CD4-positive, alpha-beta memory T cell (primary cell): ENCODE measurements at regions of chrX and their contacts with region 1.

Region 1: GRCh38 chrX:44872817-44873414 is at the start of gene KDM6A:
- DNase-seq: peak; percentile 97 to 99 (median 99)
- H3K4me3 ChIP-seq: peak within 1 kb of the TSS; percentile 62 to 73
- H3K4me3 Mint-ChIP-seq: peak within 1 kb of the TSS; percentile 93 to 100 (median 99)
- H3K27ac ChIP-seq: peak within 1 kb of the TSS; percentile 85
- H3K27ac Mint-ChIP-seq: peak within 1 kb of the TSS; percentile 97 to 100 (median 99)
- H3K4me1 ChIP-seq: peaks cover 30% of the 10 kb centered on the region
- H3K4me1 Mint-ChIP-seq: peaks cover 9 to 38% (median 28%) of the 10 kb centered on the region in 4 donors
- H3K27me3 ChIP-seq: no peaks in the 10 kb centered on the region
- H3K27me3 Mint-ChIP-seq: no peaks in the 10 kb centered on the region
- total RNA-seq, gene KDM6A: 44.9 to 51.2 TPM

Region 2: GRCh38 chrX:44542567-44543325 is 330.2 kb before region 1 on chrX and contains the start of gene FUNDC1:
- CTCF ChIA-PET with region 1: no interaction called
- POLR2A ChIA-PET with region 1: interaction called, 4 read pairs
- intact Hi-C with region 1: loop called (anchors 5 kb)
- DNase-seq: peak; percentile 90 to 92 (median 91)
- H3K4me3 ChIP-seq: peak within 1 kb of the TSS; percentile 52 to 66
- H3K4me3 Mint-ChIP-seq: peak within 1 kb of the TSS; percentile 90 to 96 (median 96)
- H3K27ac ChIP-seq: peak within 1 kb of the TSS; percentile 73
- H3K27ac Mint-ChIP-seq: peak within 1 kb of the TSS; percentile 82 to 97 (median 96)
- H3K4me1 ChIP-seq: peaks cover 26% of the 10 kb centered on the region
- H3K4me1 Mint-ChIP-seq: peaks cover 11 to 38% (median 33%) of the 10 kb centered on the region in 4 donors
- H3K27me3 ChIP-seq: no peaks in the 10 kb centered on the region
- H3K27me3 Mint-ChIP-seq: no peaks in the 10 kb centered on the region
- total RNA-seq, gene FUNDC1: 7.4 to 8.7 TPM

Region 3: DNA sequence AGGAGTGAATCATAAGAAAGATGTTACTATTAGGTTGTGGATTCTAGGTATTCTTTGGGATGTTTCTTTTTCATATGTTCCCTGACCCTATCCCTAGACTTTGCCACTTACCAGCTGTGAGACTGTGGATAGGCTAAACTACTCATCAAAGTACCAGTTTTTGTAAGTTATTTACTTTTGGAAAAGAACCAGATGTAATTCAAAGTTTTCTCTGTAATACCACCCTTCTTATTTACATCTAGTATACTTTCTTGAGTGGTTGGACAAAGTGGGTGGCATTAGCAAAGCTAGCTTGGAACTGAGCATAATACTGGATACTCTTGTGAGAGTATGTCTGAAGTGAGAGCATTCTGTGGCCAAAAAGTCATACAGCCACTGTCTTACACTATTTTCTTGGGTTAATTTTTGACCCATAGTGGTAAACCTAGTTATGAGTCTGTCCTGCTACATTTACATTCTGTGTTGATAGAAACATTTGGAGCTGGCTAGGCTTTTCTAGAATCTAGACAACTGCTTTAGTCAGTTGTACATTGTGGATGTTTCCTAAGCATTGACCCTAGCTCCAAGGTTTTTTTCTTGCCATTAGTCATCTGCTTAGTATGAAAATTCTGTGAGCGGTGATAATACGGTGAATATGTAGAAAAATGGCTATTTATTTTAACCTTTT is 41.7 kb after region 1 on chrX:
- CTCF ChIA-PET with region 1: no interaction called
- POLR2A ChIA-PET with region 1: no interaction called
- intact Hi-C with region 1: no loop called
- DNase-seq: no peak
- H3K4me3 ChIP-seq: no peak overlapping the region
- H3K4me3 Mint-ChIP-seq: peak overlapping the region in 4 of 8 donors; percentile 15 to 71 (median 40)
- H3K27ac ChIP-seq: no peak overlapping the region
- H3K27ac Mint-ChIP-seq: peak overlapping the region in 1 of 7 donors; percentile 15
- H3K4me1 ChIP-seq: peaks cover 41% of the 10 kb centered on the region
- H3K4me1 Mint-ChIP-seq: peaks cover 27 to 64% (median 50%) of the 10 kb centered on the region in 4 donors
- H3K27me3 ChIP-seq: no peaks in the 10 kb centered on the region
- H3K27me3 Mint-ChIP-seq: no peaks in the 10 kb centered on the region

Region 4: GRCh38 chrX:44945736-44946135 is 72.8 kb after region 1 on chrX:
- CTCF ChIA-PET with region 1: no interaction called
- POLR2A ChIA-PET with region 1: no interaction called
- intact Hi-C with region 1: loop called (anchors 10 kb)
- DNase-seq: peak in 1 of 5 donors; percentile 6
- H3K4me3 ChIP-seq: no peak overlapping the region
- H3K4me3 Mint-ChIP-seq: no peak overlapping the region
- H3K27ac ChIP-seq: no peak overlapping the region
- H3K27ac Mint-ChIP-seq: no peak overlapping the region
- H3K4me1 ChIP-seq: peaks cover 9% of the 10 kb centered on the region
- H3K4me1 Mint-ChIP-seq: peaks cover 16 to 53% (median 29%) of the 10 kb centered on the region in 4 donors
- H3K27me3 ChIP-seq: no peaks in the 10 kb centered on the region
- H3K27me3 Mint-ChIP-seq: no peaks in the 10 kb centered on the region

Region 5: DNA sequence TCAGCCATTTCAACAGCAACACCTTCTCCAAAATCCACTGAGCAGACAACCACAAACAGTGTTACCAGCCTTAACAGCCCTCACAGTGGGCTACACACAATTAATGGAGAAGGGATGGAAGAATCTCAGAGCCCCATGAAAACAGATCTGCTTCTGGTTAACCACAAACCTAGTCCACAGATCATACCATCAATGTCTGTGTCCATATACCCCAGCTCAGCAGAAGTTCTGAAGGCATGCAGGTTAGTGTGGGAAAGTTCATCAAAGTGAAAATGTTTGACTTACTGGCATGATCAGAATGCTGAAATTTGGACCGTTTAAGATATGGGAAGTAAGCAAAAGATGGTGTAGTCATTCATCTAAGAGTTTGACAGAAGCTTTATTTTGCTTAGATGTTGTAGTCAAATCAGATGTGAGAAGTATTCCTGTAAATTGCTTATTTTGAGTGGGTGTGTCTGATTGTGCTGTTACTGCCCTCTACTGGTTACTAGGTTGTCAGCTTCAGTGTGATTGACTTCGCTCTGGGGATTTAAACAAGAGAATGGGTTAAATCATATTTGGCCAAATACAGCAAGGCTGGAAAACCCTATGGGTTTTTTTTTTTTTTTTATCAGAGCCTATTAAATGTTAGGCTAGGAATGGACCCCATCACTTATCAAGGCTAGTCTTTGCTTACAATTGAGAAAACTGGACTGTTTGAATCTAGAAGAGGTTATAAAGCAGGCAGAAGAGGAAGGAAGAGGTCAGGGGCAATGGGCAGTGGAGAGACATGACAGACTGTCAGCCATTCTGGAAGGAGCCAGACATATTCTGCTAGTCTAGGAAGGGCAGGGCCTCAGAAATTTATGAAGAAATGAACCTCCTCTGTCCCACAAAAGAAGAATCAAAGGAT is 197.4 kb after region 1 on chrX:
- CTCF ChIA-PET with region 1: interaction called, 3 read pairs
- POLR2A ChIA-PET with region 1: interaction called, 7 read pairs
- intact Hi-C with region 1: loop called (anchors 1 kb)
- DNase-seq: peak in 4 of 5 donors; percentile 38 to 52 (median 46)
- H3K4me3 ChIP-seq: no peak overlapping the region
- H3K4me3 Mint-ChIP-seq: peak overlapping the region in 3 of 8 donors; percentile 21 to 35 (median 26)
- H3K27ac ChIP-seq: no peak overlapping the region
- H3K27ac Mint-ChIP-seq: peak overlapping the region; percentile 40 to 86 (median 65)
- H3K4me1 ChIP-seq: peaks cover 28% of the 10 kb centered on the region
- H3K4me1 Mint-ChIP-seq: peaks cover 37 to 74% (median 55%) of the 10 kb centered on the region in 4 donors
- H3K27me3 ChIP-seq: no peaks in the 10 kb centered on the region
- H3K27me3 Mint-ChIP-seq: no peaks in the 10 kb centered on the region